Prostate gland (tissue), 2 donors: ENCODE measurements at regions of chr11 and their contacts with region 1.

Region 1: DNA sequence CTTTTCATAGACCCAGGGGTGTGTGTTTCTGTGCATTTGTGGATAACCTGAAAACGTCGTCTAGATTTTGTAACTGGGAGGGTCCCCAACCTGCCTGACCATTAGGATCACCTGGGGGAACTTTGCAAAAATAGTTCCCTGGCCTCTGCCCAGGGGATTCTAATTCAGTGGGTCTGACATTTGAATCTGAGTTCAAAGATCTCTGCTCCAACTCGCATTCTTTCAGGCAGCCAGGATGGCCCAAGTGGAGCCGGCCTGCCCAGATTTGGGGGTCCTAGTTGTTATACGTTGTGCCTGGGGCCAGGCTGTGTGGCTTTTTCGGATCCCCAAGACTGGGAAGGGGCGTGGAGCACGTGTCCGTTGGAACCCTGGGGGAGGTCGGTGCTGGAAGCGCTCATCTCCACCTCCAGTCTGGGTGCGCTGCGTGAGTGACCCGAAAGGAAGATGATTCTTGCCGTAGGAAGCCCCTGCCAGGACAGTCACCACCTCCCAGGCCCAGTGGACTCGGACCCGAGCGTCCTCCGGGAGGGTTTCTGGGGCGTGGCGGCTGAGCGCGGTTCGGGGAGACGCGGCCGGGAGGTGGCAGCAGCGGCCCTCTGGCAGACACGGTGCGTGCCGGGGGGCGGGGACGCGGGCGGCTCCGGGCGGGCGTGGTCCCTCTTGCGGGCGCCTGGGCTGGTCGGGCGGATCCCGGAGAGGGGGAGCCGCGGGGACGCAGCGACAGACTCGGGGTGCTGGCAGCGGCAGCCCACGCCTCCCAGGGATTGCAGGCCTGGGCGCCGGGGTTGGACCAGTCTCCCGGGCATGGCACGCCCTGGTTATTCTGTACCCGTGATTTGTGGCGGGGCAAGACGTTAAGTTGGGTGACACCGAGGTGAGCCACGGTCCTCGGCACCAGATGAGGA is 29.2 kb upstream of the PLET1 start:
- DNase-seq: peak; percentile 74
- H3K4me3 ChIP-seq: peak overlapping the region; percentile 38
- H3K27ac ChIP-seq: peak overlapping the region; percentile 39 to 63
- H3K4me1 ChIP-seq: no peaks in the 10 kb centered on the region
- H3K27me3 ChIP-seq: no peaks in the 10 kb centered on the region
- CTCF ChIP-seq: peak; percentile 80 to 92 (median 90)
- POLR2A ChIP-seq: no peak

Region 2: GRCh38 chr11:112255067-112255720 is 34.6 kb before region 1 on chr11:
- intact Hi-C with region 1: no loop called
- DNase-seq: no peak
- H3K4me3 ChIP-seq: no peak overlapping the region
- H3K27ac ChIP-seq: no peak overlapping the region
- H3K4me1 ChIP-seq: no peaks in the 10 kb centered on the region
- H3K27me3 ChIP-seq: no peaks in the 10 kb centered on the region
- CTCF ChIP-seq: no peak
- POLR2A ChIP-seq: no peak

Region 3: DNA sequence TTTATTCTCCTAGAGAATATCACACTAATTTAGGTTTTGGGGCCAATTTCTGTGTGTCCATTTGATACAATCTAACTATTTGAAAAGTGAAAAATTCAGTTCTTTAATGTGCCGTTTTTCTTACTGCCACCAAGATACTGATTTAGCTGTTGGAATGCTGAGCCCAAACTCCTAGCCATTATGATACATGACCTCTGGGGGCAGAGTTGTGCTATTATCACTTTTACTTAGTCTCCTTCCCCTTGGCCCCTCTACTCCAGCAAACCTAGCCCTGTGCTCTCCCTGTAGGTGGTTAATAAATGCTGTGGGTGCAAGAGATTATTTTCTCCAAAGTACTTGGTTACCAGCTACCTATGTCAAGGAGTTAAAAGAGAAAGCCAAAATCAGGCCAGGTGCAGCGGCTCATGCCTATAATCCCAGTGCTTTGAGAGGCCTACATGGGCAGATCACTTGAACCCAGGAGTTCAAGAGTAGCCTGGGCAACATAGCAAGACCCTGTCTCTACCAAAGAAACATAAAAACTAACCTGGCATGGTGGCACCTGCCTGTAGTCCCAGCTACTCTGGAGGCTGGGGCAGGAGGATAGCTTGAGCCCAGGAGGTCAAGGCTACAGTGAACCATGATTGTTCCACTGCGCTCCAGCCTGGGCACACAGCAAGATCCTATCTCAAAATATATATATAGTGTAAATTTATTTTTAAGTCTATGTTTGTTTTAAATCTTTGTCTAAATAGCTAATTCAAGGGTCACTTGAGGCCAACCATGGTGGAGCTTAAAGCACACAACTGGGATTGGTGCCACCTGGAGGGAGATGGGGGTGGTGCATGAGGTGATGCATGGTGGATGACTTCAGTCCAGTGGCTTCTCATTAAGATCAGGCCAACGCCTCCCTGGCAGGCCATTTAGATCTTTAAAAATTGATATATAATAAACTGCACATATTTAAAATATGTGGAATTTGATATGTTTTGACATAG is 164.0 kb after region 1 on chr11:
- intact Hi-C with region 1: loop called (anchors 10 kb)
- DNase-seq: peak; percentile 10
- H3K4me3 ChIP-seq: no peak overlapping the region
- H3K27ac ChIP-seq: no peak overlapping the region
- H3K4me1 ChIP-seq: no peaks in the 10 kb centered on the region
- H3K27me3 ChIP-seq: no peaks in the 10 kb centered on the region
- CTCF ChIP-seq: peak in 2 of 4 experiments; percentile 32 to 39
- POLR2A ChIP-seq: no peak

Region 4: DNA sequence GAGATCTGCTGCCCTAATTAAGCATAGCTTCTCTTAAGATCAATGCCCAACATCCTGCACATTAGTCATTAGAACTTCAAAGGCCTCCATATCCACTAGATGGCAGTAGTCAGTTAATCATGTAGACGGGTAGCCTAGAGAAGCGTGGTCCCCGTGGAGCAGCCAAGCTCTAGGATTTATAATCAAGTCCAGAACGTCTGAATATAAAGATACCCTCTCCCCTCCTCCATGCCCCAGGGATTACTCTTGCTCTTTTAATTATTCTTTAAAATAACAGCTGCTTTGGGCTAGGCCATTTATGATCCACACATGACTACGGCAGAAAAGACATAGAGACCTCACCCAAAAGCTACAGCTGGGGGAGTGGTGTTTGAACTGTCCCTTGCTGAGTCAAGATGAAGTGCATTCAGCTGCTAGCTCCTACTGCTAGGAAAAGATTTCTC is 298.4 kb after region 1 on chr11:
- intact Hi-C with region 1: loop called (anchors 10 kb)
- DNase-seq: peak; percentile 63
- H3K4me3 ChIP-seq: no peak overlapping the region
- H3K27ac ChIP-seq: no peak overlapping the region
- H3K4me1 ChIP-seq: no peaks in the 10 kb centered on the region
- H3K27me3 ChIP-seq: no peaks in the 10 kb centered on the region
- CTCF ChIP-seq: peak; percentile 32 to 77 (median 68)
- POLR2A ChIP-seq: no peak

Region 5: GRCh38 chr11:112961146-112961668 is 671.4 kb after region 1 on chr11 and contains the start of gene NCAM1:
- intact Hi-C with region 1: loop called (anchors 10 kb)
- DNase-seq: no peak
- H3K4me3 ChIP-seq: peak within 1 kb of the TSS; percentile 31 to 36
- H3K27ac ChIP-seq: no peak within 1 kb of the TSS
- H3K4me1 ChIP-seq: no peaks in the 10 kb centered on the region
- H3K27me3 ChIP-seq: peaks cover 14% of the 10 kb centered on the region
- CTCF ChIP-seq: no peak
- POLR2A ChIP-seq: no peak
- total RNA-seq, gene NCAM1: 3.8 to 39.7 TPM

Region 6: GRCh38 chr11:113289431-113290187 is 999.8 kb after region 1 on chr11:
- intact Hi-C with region 1: loop called (anchors 1 kb)
- DNase-seq: peak; percentile 27
- H3K4me3 ChIP-seq: no peak overlapping the region
- H3K27ac ChIP-seq: no peak overlapping the region
- H3K4me1 ChIP-seq: no peaks in the 10 kb centered on the region
- H3K27me3 ChIP-seq: no peaks in the 10 kb centered on the region
- CTCF ChIP-seq: peak; percentile 71 to 85 (median 81)
- POLR2A ChIP-seq: no peak